ENCODE measurements at regions of chr21 and their contacts with region 1.

Region 1: GRCh38 chr21:28745131-28746016 is 247.3 kb downstream of the LTN1 start:
- DNase-seq: peak; percentile 29
- ATAC-seq: peak; percentile 88
- H3K4me3 Mint-ChIP-seq: no peak overlapping the region
- H3K27ac Mint-ChIP-seq: no peak overlapping the region
- H3K4me1 Mint-ChIP-seq: no peaks in the 10 kb centered on the region
- H3K27me3 Mint-ChIP-seq: no peaks in the 10 kb centered on the region
- CTCF ChIP-seq: no peak

Region 2: GRCh38 chr21:26769613-26770188 is 1975.7 kb before region 1 on chr21:
- CTCF ChIA-PET with region 1: interaction called, 7 read pairs
- POLR2A ChIA-PET with region 1: no interaction called
- intact Hi-C with region 1: loop called (anchors 1 kb)
- DNase-seq: no peak
- ATAC-seq: no peak
- H3K4me3 Mint-ChIP-seq: no peak overlapping the region
- H3K27ac Mint-ChIP-seq: no peak overlapping the region
- H3K4me1 Mint-ChIP-seq: no peaks in the 10 kb centered on the region
- H3K27me3 Mint-ChIP-seq: no peaks in the 10 kb centered on the region
- CTCF ChIP-seq: no peak

Region 3: GRCh38 chr21:26881504-26882228 is 1863.7 kb before region 1 on chr21:
- CTCF ChIA-PET with region 1: interaction called, 4 read pairs
- POLR2A ChIA-PET with region 1: no interaction called
- intact Hi-C with region 1: loop called (anchors 1 kb)
- DNase-seq: no peak
- ATAC-seq: no peak
- H3K4me3 Mint-ChIP-seq: no peak overlapping the region
- H3K27ac Mint-ChIP-seq: no peak overlapping the region
- H3K4me1 Mint-ChIP-seq: no peaks in the 10 kb centered on the region
- H3K27me3 Mint-ChIP-seq: peaks cover 1% of the 10 kb centered on the region
- CTCF ChIP-seq: no peak

Region 4: GRCh38 chr21:28336314-28336713 is 409.1 kb before region 1 on chr21:
- CTCF ChIA-PET with region 1: no interaction called
- POLR2A ChIA-PET with region 1: no interaction called
- intact Hi-C with region 1: loop called (anchors 10 kb)
- DNase-seq: no peak
- ATAC-seq: no peak
- H3K4me3 Mint-ChIP-seq: no peak overlapping the region
- H3K27ac Mint-ChIP-seq: no peak overlapping the region
- H3K4me1 Mint-ChIP-seq: no peaks in the 10 kb centered on the region
- H3K27me3 Mint-ChIP-seq: no peaks in the 10 kb centered on the region
- CTCF ChIP-seq: no peak

Region 5: GRCh38 chr21:28522014-28522799 is 223.2 kb before region 1 on chr21:
- CTCF ChIA-PET with region 1: interaction called, 193 read pairs
- POLR2A ChIA-PET with region 1: no interaction called
- intact Hi-C with region 1: loop called (anchors 1 kb)
- DNase-seq: no peak
- ATAC-seq: no peak
- H3K4me3 Mint-ChIP-seq: no peak overlapping the region
- H3K27ac Mint-ChIP-seq: no peak overlapping the region
- H3K4me1 Mint-ChIP-seq: peaks cover 4% of the 10 kb centered on the region
- H3K27me3 Mint-ChIP-seq: peaks cover 2% of the 10 kb centered on the region
- CTCF ChIP-seq: no peak

Region 6: GRCh38 chr21:28943631-28944030 is 198.3 kb after region 1 on chr21:
- CTCF ChIA-PET with region 1: interaction called, 12 read pairs
- POLR2A ChIA-PET with region 1: no interaction called
- intact Hi-C with region 1: loop called (anchors 1 kb)
- DNase-seq: no peak
- ATAC-seq: no peak
- H3K4me3 Mint-ChIP-seq: no peak overlapping the region
- H3K27ac Mint-ChIP-seq: no peak overlapping the region
- H3K4me1 Mint-ChIP-seq: no peaks in the 10 kb centered on the region
- H3K27me3 Mint-ChIP-seq: no peaks in the 10 kb centered on the region
- CTCF ChIP-seq: no peak